ENCODE measurements at regions of chr11 and their contacts with region 1.

Region 1: GRCh38 chr11:35058669-35059434 is 80.1 kb upstream of the CD44 start:
- DNase-seq: no peak
- ATAC-seq: peak; percentile 49
- H3K4me3 Mint-ChIP-seq: peak overlapping the region; percentile 33
- H3K27ac Mint-ChIP-seq: peak overlapping the region; percentile 92
- H3K4me1 Mint-ChIP-seq: peaks cover 30% of the 10 kb centered on the region
- H3K27me3 Mint-ChIP-seq: no peaks in the 10 kb centered on the region
- CTCF ChIP-seq: no peak

Region 2: DNA sequence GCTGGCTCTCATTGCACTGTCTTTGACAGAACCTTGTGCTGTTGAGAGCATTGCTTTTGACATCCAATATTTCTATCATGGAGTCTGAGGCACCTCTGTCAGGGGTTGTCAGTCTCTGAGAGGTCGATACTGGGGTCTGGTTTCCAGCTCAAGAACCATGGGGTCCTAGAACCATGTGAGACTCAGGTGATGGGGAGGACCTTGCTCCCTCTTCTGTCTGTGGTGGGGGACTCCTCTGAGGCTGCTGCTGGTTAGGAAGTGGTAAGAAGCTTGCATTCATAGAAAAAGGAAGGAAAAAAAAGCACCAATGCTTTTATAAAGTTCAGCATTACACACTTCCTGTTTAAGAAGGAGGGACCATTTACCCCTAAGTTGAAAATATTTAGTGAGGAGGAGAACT is 11.7 kb before region 1 on chr11:
- CTCF ChIA-PET with region 1: interaction called, 11 read pairs
- POLR2A ChIA-PET with region 1: interaction called, 8 read pairs
- intact Hi-C with region 1: no loop called
- DNase-seq: peak; percentile 59
- ATAC-seq: peak; percentile 55
- H3K4me3 Mint-ChIP-seq: peak overlapping the region; percentile 39
- H3K27ac Mint-ChIP-seq: peak overlapping the region; percentile 91
- H3K4me1 Mint-ChIP-seq: peaks cover 76% of the 10 kb centered on the region
- H3K27me3 Mint-ChIP-seq: no peaks in the 10 kb centered on the region
- CTCF ChIP-seq: no peak